ENCODE measurements at regions of chr20 and their contacts with region 1.

Region 1: GRCh38 chr20:20085071-20085470 is 32.7 kb downstream of the CFAP61 start:
- DNase-seq: peak in 1 of 2 donors; percentile 31
- H3K4me3 ChIP-seq: no peak overlapping the region
- H3K27ac ChIP-seq: peak overlapping the region in 1 of 5 donors; percentile 49
- H3K4me1 ChIP-seq: peaks cover 0 to 20% (median 8%) of the 10 kb centered on the region in 4 donors
- H3K27me3 ChIP-seq: peaks cover 0 to 13% (median 0%) of the 10 kb centered on the region in 3 donors
- CTCF ChIP-seq: no peak
- EP300 ChIP-seq: no peak
- POLR2A ChIP-seq: no peak

Region 2: GRCh38 chr20:19974626-19975435 is 110.2 kb before region 1 on chr20:
- intact Hi-C with region 1: no loop called
- DNase-seq: peak; percentile 88 to 94
- H3K4me3 ChIP-seq: peak overlapping the region; percentile 47 to 67 (median 53)
- H3K27ac ChIP-seq: peak overlapping the region; percentile 88 to 95 (median 91)
- H3K4me1 ChIP-seq: peaks cover 45 to 64% (median 51%) of the 10 kb centered on the region in 4 donors
- H3K27me3 ChIP-seq: no peaks in the 10 kb centered on the region
- CTCF ChIP-seq: no peak
- EP300 ChIP-seq: no peak
- POLR2A ChIP-seq: no peak

Region 3: DNA sequence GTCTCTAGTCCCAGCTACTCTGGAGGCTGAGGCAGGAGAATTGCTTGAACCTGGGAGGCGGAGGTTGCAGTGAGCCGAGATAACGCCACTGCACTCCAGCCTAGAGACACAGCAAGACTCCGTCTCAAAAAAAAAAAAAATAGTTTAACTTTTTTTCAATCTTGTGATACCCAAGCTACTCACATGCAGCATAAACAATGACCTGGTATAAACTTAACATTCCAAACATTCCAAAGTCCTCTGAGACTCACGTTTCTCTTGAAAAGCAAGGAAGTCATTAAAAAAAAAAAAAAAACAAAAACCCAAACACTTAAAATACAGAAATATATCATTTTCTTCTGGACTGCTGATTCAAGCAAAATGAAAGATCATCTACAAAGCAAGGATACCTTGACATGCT is 47.1 kb before region 1 on chr20:
- intact Hi-C with region 1: no loop called
- DNase-seq: no peak
- H3K4me3 ChIP-seq: no peak overlapping the region
- H3K27ac ChIP-seq: no peak overlapping the region
- H3K4me1 ChIP-seq: no peaks in the 10 kb centered on the region
- H3K27me3 ChIP-seq: no peaks in the 10 kb centered on the region
- CTCF ChIP-seq: no peak
- EP300 ChIP-seq: no peak
- POLR2A ChIP-seq: no peak

Region 4: GRCh38 chr20:20207872-20208271 is 122.8 kb after region 1 on chr20:
- intact Hi-C with region 1: no loop called
- DNase-seq: no peak
- H3K4me3 ChIP-seq: no peak overlapping the region
- H3K27ac ChIP-seq: no peak overlapping the region
- H3K4me1 ChIP-seq: peaks cover 0 to 4% (median 0%) of the 10 kb centered on the region in 4 donors
- H3K27me3 ChIP-seq: peaks cover 0 to 4% (median 0%) of the 10 kb centered on the region in 3 donors
- CTCF ChIP-seq: no peak
- EP300 ChIP-seq: no peak
- POLR2A ChIP-seq: no peak

Region 5: GRCh38 chr20:20241976-20242375 is 156.9 kb after region 1 on chr20:
- intact Hi-C with region 1: loop called (anchors 5 kb)
- DNase-seq: no peak
- H3K4me3 ChIP-seq: no peak overlapping the region
- H3K27ac ChIP-seq: no peak overlapping the region
- H3K4me1 ChIP-seq: no peaks in the 10 kb centered on the region
- H3K27me3 ChIP-seq: no peaks in the 10 kb centered on the region
- CTCF ChIP-seq: no peak
- EP300 ChIP-seq: no peak
- POLR2A ChIP-seq: no peak

Measured in stomach (tissue), 19 donors.